MCF 10A (cell line): ENCODE measurements at regions of chr3 and their contacts with region 1.

Region 1: GRCh38 chr3:58217209-58217811 is 6.5 kb upstream of the DNASE1L3 start:
- DNase-seq: peak; percentile 94
- H3K4me3 Mint-ChIP-seq: peak overlapping the region; percentile 28
- H3K27ac Mint-ChIP-seq: peak overlapping the region; percentile 10
- H3K4me1 Mint-ChIP-seq: peaks cover 25% of the 10 kb centered on the region
- H3K27me3 Mint-ChIP-seq: no peaks in the 10 kb centered on the region
- CTCF ChIP-seq: peak; percentile 70

Region 2: DNA sequence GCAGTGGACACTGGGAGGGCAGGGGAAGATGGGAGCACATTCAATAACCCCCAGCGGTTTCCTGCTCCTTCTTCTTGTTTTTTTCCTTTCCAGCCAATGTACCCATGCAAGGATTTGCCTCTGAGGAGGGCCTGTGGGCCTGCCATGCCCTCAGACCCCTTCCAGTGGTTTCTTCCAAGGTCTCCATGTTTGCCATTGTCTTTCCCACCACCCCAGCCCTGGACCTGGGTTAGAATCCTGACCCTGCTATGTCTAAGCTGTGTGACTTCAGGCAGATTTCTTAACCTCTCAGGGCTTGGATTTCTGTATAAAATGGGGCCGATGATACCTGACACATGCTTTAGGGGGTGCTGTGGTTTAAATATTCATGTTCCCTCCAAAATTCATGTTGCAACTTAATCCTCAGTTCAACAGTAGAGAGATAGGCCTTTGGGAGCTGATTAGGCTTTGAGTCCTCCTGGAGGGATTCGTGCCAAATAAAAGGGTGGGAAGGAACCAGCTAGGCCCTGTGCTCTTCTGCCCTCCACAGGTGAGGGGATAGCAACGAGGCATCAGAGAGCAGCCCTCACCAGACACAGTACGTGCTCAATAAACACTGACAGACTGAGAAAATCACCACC is 255.4 kb before region 1 on chr3:
- CTCF ChIA-PET with region 1: interaction called, 3 read pairs
- POLR2A ChIA-PET with region 1: no interaction called
- intact Hi-C with region 1: loop called (anchors 1 kb)
- DNase-seq: peak; percentile 79
- H3K4me3 Mint-ChIP-seq: no peak overlapping the region
- H3K27ac Mint-ChIP-seq: no peak overlapping the region
- H3K4me1 Mint-ChIP-seq: peaks cover 14% of the 10 kb centered on the region
- H3K27me3 Mint-ChIP-seq: no peaks in the 10 kb centered on the region
- CTCF ChIP-seq: peak; percentile 70

Region 3: DNA sequence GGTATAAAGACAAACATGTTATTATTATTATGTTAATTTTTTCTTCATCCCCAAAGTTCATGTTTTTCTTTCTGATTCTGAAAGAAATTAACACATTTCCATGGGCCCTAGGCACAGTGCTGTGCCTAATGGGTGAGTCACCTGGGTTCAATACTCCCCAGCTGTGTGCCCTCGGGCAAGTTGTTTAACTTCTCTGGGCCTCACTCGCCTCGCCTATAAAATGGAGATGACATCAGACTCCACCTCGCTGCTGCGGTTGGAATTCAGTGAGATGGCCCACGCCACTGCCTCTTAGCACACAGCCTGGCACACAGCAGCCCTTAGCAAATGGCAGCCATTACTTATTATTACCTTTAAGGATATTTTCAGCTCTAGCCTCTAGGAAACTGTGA is 29.1 kb before region 1 on chr3:
- CTCF ChIA-PET with region 1: interaction called, 158 read pairs
- POLR2A ChIA-PET with region 1: interaction called, 32 read pairs
- intact Hi-C with region 1: loop called (anchors 1 kb)
- DNase-seq: peak; percentile 86
- H3K4me3 Mint-ChIP-seq: no peak overlapping the region
- H3K27ac Mint-ChIP-seq: no peak overlapping the region
- H3K4me1 Mint-ChIP-seq: peaks cover 9% of the 10 kb centered on the region
- H3K27me3 Mint-ChIP-seq: no peaks in the 10 kb centered on the region
- CTCF ChIP-seq: no peak

Region 4: GRCh38 chr3:58206406-58207011 is 10.8 kb before region 1 on chr3:
- CTCF ChIA-PET with region 1: interaction called, 23 read pairs
- POLR2A ChIA-PET with region 1: interaction called, 10 read pairs
- intact Hi-C with region 1: no loop called
- DNase-seq: peak; percentile 64
- H3K4me3 Mint-ChIP-seq: no peak overlapping the region
- H3K27ac Mint-ChIP-seq: no peak overlapping the region
- H3K4me1 Mint-ChIP-seq: no peaks in the 10 kb centered on the region
- H3K27me3 Mint-ChIP-seq: peaks cover 24% of the 10 kb centered on the region
- CTCF ChIP-seq: no peak

Region 5: DNA sequence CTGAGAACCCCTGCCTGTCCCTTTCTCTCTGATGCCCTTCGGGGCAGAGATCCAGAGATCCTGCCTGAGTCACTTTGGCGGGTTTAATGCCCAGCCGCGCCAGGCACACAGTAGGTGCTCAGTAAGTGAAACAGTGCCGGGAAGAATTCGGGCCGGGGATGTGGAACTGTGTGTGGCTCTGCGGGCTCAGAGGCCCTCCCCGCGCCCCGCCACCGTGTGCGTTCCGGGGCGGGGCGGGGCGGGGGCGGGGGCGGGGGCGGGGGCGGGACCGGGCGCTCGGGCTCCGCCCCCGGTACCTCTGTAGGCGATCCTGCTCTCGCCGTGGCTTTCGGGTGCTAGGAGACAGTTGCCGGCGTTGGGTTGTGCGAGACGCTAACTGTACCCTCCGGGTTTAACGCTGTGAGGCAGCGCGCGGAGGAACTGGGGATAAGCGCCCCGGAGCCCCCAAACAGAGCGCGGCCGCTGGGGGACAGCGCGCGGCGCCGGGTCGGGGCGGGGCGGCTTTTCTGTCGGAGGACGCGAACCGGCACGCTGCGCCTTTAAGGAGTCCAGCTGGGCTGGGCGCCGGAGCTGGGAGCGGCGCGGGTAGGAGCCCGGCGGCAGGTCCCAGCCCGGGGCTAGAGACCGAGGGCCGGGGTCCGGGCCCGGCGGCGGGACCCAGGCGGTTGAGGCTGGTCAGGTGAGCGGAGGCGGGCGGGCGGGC is 20.1 kb after region 1 on chr3 and contains the start of gene ABHD6:
- CTCF ChIA-PET with region 1: interaction called, 33 read pairs
- POLR2A ChIA-PET with region 1: interaction called, 20 read pairs
- intact Hi-C with region 1: loop called (anchors 1 kb)
- DNase-seq: peak; percentile 69
- H3K4me3 Mint-ChIP-seq: peak within 1 kb of the TSS; percentile 87
- H3K27ac Mint-ChIP-seq: peak within 1 kb of the TSS; percentile 75
- H3K4me1 Mint-ChIP-seq: peaks cover 23% of the 10 kb centered on the region
- H3K27me3 Mint-ChIP-seq: peaks cover 6% of the 10 kb centered on the region
- CTCF ChIP-seq: peak; percentile 18
- total RNA-seq, gene ABHD6: 3.4 and 3.9 TPM in 2 replicates

Region 6: DNA sequence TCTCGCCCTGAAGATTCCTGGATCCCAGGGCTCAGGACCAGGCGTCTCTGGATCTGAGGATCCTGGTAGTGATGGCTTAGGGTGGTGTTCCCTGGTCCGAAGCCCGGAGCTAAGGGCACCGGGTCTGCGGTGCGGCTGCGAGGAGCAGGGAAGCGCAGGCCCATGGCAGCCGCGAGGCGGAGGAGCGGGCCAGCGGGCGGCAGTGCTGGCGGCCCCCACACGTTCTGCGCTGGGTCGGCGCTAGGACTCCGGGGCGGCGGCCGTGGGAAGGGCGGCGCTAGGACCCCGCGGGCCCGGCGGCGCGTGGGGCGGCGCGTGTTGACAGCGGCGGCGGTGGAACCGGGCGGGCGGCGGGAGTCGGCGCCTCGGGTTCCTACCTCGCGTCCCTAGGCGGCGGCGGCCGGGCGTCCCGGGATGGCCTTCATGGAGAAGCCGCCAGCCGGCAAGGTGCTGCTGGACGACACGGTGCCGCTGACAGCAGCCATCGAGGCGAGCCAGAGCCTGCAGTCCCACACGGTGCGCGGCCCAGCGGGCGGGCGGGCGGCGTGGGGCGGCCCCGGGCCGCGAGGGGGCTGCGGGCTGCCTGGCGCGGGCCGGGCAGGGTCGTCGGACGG is 115.4 kb after region 1 on chr3 and contains the start of gene PXK:
- CTCF ChIA-PET with region 1: no interaction called
- POLR2A ChIA-PET with region 1: interaction called, 10 read pairs
- intact Hi-C with region 1: no loop called
- DNase-seq: peak; percentile 71
- H3K4me3 Mint-ChIP-seq: peak within 1 kb of the TSS; percentile 78
- H3K27ac Mint-ChIP-seq: peak within 1 kb of the TSS; percentile 93
- H3K4me1 Mint-ChIP-seq: peaks cover 22% of the 10 kb centered on the region
- H3K27me3 Mint-ChIP-seq: no peaks in the 10 kb centered on the region
- CTCF ChIP-seq: no peak
- total RNA-seq, gene PXK: 55.1 and 62.2 TPM in 2 replicates

Region 7: DNA sequence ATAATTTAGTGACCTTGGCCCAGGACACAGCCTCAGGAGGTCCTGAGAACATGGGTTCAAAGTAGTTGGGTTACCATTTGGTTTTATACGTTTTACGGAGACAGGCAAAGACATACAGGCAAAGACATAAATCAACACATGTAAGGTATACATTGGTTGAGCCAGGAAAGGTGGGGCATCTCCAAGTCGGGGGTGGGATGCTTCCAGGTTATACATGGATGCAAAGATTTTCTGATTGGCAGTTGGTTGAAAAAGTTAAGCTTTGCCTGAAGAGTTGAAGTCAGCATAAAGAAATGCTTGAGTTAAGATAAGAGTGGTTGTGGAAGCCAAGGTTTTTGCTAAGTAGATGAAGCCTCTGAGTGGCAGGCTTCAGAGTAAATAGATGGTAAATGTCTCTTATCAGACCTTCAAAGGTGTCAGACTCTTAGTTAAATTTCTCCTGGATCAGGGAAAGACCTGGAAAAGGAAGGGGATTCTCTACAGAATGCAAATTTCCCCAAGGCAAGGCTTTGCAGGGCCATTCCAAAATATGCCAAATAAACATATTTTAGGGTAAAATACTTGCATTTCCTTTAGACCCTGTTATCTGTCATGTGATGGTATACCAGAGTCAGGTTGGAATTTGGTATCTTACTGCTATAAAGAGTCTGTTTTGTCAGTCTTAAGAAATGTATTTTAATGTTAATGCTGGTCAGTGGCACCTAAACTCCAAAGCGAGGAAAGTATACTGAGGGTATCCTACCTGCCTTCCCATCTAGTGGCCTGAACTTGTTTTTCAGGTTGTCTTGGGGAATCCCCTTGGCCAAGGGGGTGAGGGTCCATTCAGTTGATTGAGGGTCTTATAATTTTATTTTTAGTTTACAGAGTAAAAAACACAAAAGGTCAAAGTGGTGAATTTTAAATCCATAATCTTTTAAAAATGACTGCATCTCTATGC is 224.5 kb after region 1 on chr3:
- CTCF ChIA-PET with region 1: no interaction called
- POLR2A ChIA-PET with region 1: no interaction called
- intact Hi-C with region 1: no loop called
- DNase-seq: no peak
- H3K4me3 Mint-ChIP-seq: no peak overlapping the region
- H3K27ac Mint-ChIP-seq: no peak overlapping the region
- H3K4me1 Mint-ChIP-seq: no peaks in the 10 kb centered on the region
- H3K27me3 Mint-ChIP-seq: no peaks in the 10 kb centered on the region
- CTCF ChIP-seq: no peak